ENCODE measurements at regions of chrX and their contacts with region 1.

Region 1: DNA sequence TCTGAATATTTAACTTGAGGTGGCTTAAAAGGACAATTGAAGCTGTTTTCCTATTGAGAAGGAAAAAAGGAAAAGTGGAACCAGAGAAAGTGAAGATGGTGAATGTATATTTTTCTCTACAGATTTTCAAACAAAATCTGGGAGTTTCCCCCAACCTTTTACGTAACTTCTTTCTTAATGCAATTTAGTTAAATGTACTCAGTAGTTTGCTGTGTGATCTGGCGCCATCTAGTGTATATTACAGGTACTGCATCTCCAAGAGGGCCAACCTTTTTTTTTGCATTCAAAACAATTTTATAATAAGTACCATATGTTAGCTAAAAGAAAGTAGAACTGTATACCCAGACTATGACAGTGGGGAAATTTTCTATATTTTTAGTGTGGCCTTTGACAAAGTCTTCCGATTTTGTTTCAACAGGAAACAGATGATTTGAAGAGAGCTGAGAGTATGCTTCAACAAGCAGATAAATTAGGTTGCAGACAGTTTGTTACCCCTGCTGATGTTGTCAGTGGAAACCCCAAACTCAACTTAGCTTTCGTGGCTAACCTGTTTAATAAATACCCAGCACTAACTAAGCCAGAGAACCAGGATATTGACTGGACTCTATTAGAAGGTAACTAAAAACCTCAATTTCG is 82.0 kb downstream of the PLS3 start:
- DNase-seq: peak; percentile 12
- ATAC-seq: no peak
- H3K4me3 Mint-ChIP-seq: no peak overlapping the region
- H3K27ac Mint-ChIP-seq: no peak overlapping the region
- H3K4me1 Mint-ChIP-seq: peaks cover 25% of the 10 kb centered on the region
- H3K27me3 Mint-ChIP-seq: peaks cover 3% of the 10 kb centered on the region; the same call in 1 of the 2 replicates
- CTCF ChIP-seq: peak; percentile 86

Region 2: GRCh38 chrX:115330498-115331168 is 312.4 kb before region 1 on chrX:
- CTCF ChIA-PET with region 1: interaction called, 14 read pairs
- POLR2A ChIA-PET with region 1: interaction called, 4 read pairs
- DNase-seq: peak; percentile 18
- ATAC-seq: peak; percentile 75
- H3K4me3 Mint-ChIP-seq: no peak overlapping the region
- H3K27ac Mint-ChIP-seq: no peak overlapping the region
- H3K4me1 Mint-ChIP-seq: peaks cover 25% of the 10 kb centered on the region
- H3K27me3 Mint-ChIP-seq: no peaks in the 10 kb centered on the region
- CTCF ChIP-seq: peak; percentile 59

Measured in WTC11 (cell line).